H1 (cell line): ENCODE measurements at regions of chr2 and their contacts with region 1.

Region 1: GRCh38 chr2:99066075-99066958 is 75.2 kb upstream of the C2orf15 start:
- DNase-seq: no peak
- H3K4me3 ChIP-seq: no peak overlapping the region
- H3K27ac ChIP-seq: no peak overlapping the region
- H3K4me1 ChIP-seq: no peaks in the 10 kb centered on the region
- H3K27me3 ChIP-seq: no peaks in the 10 kb centered on the region
- CTCF ChIP-seq: peak; percentile 47 to 55 (median 47)
- EP300 ChIP-seq: no peak
- POLR2A ChIP-seq: no peak
- RAD21 ChIP-seq: peak; percentile 74 to 76

Region 2: GRCh38 chr2:99079226-99079625 is 12.9 kb after region 1 on chr2:
- CTCF ChIA-PET with region 1: interaction called, 11 read pairs
- POLR2A ChIA-PET with region 1: no interaction called
- DNase-seq: no peak
- H3K4me3 ChIP-seq: no peak overlapping the region
- H3K27ac ChIP-seq: no peak overlapping the region
- H3K4me1 ChIP-seq: peaks cover 0 to 5% (median 3%) of the 10 kb centered on the region in 4 experiments; a peak in 3 of 7 replicates
- H3K27me3 ChIP-seq: no peaks in the 10 kb centered on the region
- CTCF ChIP-seq: no peak
- EP300 ChIP-seq: no peak
- POLR2A ChIP-seq: no peak
- RAD21 ChIP-seq: no peak

Region 3: GRCh38 chr2:99545066-99545465 is 478.7 kb after region 1 on chr2:
- CTCF ChIA-PET with region 1: no interaction called
- POLR2A ChIA-PET with region 1: no interaction called
- DNase-seq: no peak
- H3K4me3 ChIP-seq: no peak overlapping the region
- H3K27ac ChIP-seq: no peak overlapping the region
- H3K4me1 ChIP-seq: peaks cover 0 to 2% (median 0%) of the 10 kb centered on the region in 4 experiments; a peak in 1 of 7 replicates
- H3K27me3 ChIP-seq: no peaks in the 10 kb centered on the region
- CTCF ChIP-seq: no peak
- EP300 ChIP-seq: no peak
- POLR2A ChIP-seq: no peak
- RAD21 ChIP-seq: no peak